ENCODE measurements at regions of chr15 and their contacts with region 1.

Region 1: DNA sequence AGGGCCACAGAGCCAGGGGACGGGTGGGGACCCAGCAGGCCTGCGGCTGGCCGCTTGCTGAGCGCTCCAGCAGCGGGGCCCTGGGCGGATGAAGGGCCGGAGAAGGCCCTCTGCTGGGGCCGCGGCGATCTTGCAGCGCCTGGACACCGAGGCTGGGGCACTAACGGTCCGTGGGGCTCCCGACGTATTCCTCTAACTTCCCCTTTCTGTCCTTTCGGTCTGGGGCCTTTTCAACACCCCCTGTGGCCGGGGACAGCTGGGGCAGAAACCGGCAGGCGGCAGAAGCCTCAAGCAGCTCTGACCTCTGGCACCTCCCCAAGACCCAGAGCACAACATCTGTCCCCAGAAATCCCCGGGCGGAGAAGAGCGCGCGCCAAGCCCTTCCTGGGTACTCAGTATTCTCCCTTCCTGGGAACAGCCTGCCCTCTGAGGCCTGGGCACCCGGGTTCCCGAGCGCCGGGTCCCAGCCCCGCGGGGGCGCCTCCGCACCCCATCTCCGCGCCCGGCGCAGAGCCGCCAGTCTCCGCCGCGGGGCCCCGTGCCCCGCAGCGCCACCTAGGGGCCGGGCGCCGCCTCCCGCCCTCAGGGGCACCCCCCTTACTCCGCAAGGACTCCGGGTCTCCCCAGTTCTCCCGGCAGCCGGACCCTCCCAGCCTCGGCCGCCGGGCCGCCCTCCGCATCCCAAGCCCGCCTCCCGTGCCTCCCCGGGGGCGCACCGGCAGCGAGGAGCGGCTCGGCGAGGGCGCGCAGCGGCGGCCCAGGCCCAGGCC is 582 bp upstream of the SLCO3A1 start:
- DNase-seq: peak; percentile 83
- ATAC-seq: peak; percentile 80 to 91 (median 86)
- H3K4me3 ChIP-seq: peak overlapping the region; percentile 69 to 89 (median 82)
- H3K27ac ChIP-seq: peak overlapping the region; percentile 93 to 99 (median 97)
- H3K4me1 ChIP-seq: peaks cover 3 to 64% (median 53%) of the 10 kb centered on the region in 9 donors
- H3K27me3 ChIP-seq: no peaks in the 10 kb centered on the region
- CTCF ChIP-seq: peak; percentile 53 to 91 (median 71)

Region 2: DNA sequence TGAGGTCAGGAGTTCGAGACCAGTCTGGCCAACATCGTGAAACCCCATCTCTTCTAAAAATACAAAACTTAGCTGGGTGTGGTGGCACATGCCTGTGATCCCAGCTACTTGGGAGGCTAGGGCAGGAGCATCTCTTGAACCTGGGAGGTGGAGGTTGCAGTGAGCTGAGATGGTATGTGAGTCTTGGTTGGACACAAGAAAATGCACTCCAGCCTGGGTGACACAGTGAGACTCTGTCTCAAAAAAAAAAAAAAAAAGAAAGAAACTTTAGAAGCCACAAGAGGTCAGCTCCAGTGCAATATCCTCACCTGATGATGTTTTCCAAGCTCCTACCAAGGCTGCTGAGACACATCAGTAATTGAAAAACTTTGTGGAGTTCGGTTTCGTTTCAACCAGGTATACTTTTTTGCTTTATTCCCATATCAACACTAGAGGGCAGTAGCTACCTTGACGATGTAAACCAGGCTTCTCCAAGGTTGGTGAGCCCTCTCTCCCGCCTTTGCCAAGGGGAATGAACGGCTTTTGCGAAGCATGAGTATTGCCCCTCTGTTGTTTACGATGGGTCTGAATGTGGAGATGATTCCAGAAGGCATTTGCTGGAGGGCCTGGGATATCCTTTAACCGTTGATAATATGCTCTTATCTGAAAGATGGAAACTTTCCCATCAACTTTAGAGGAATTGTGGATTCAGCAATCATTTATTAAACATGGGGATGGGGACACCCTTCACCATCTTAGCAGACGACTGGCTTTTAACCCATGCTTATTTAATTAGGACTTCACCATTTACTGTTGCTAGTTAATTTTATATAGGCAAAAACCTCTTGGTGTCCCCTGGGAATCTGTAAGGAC is 550.1 kb before region 1 on chr15:
- intact Hi-C with region 1: loop called (anchors 2 to 10 kb)
- DNase-seq: peak in 1 of 2 donors; percentile 48
- ATAC-seq: peak; percentile 76 to 91 (median 80)
- H3K4me3 ChIP-seq: no peak overlapping the region
- H3K27ac ChIP-seq: no peak overlapping the region
- H3K4me1 ChIP-seq: peaks cover 0 to 24% (median 9%) of the 10 kb centered on the region in 9 donors
- H3K27me3 ChIP-seq: peaks cover 0 to 18% (median 7%) of the 10 kb centered on the region in 7 donors
- CTCF ChIP-seq: peak; percentile 44 to 83 (median 74)

Region 3: GRCh38 chr15:91522663-91523332 is 330.1 kb before region 1 on chr15:
- intact Hi-C with region 1: loop called in 1 of 10 experiments (anchors 10 kb)
- DNase-seq: peak in 1 of 2 donors; percentile 14
- ATAC-seq: peak in 5 of 8 donors; percentile 42 to 75 (median 71)
- H3K4me3 ChIP-seq: no peak overlapping the region
- H3K27ac ChIP-seq: no peak overlapping the region
- H3K4me1 ChIP-seq: peaks cover 0 to 14% (median 0%) of the 10 kb centered on the region in 9 donors
- H3K27me3 ChIP-seq: no peaks in the 10 kb centered on the region
- CTCF ChIP-seq: peak in 8 of 9 donors; percentile 12 to 66 (median 54)

Region 4: DNA sequence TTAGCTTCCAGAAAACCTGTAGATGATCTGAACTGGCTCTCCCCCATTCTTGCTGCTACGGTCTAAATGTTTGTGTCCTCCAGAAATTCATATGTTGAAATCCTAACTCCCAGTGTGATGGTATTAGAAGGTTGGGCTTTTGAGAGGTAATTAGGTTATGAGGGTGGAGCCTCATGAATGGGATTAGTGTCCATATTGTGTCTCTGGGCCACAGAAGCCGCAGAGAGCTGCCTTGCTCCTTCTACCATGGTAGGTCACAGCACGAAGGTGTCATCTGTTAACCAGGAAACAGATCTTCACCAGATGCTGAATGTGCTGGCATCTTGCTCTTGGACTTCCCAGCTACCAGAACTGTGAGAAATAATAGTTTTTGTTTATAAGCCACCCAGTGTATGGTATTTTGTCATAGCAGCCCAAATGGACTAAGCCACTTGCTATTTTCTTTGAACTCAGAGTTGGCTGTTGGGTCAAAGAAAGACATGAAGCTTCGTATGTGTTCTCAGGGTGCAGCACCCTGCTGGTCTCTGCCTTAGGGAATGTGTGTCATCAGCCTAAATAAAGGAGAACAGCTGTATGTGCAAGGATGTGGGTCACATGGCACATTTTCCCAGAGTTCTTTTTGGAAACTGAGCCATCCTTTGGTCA is 316.9 kb before region 1 on chr15:
- intact Hi-C with region 1: no loop called
- DNase-seq: no peak
- ATAC-seq: peak in 3 of 8 donors; percentile 31 to 50 (median 40)
- H3K4me3 ChIP-seq: no peak overlapping the region
- H3K27ac ChIP-seq: peak overlapping the region in 7 of 10 donors; percentile 1 to 75 (median 30)
- H3K4me1 ChIP-seq: peaks cover 0 to 28% (median 17%) of the 10 kb centered on the region in 9 donors
- H3K27me3 ChIP-seq: no peaks in the 10 kb centered on the region
- CTCF ChIP-seq: no peak

Region 5: DNA sequence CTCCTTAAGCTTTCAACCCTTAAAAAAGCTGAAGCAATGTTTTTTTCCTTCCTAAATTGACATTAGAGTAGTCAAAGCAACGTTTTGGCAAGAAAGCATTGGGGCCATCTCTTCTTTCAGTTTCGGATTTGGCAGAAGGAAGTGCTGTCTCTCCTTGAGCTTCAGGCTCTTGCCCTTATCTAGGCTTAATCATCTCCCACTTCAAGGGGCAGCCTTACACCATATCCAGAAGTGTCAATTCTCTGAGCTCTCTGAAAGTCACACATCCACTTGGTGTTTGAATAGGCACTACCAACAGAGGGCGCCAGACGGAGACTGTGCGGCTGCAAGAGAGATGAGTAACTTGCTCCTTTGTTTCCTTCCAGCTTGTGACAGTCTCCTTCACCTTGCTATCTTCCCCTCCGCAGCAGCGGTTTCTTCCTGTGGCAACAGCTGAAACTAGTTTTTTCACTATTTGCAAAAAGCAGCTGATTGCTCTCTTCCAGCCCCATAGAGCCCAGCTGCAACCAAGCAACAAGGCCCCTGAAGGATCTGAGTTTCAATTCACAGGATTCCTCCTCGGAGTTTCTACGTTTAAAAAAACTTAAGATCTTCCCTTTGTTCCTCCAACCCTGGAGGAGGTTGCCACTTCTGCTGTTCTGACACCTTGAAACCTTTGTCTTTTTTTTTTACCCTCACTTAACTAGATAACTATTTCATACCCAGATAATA is 146.4 kb before region 1 on chr15:
- intact Hi-C with region 1: loop called (anchors 2 to 10 kb)
- DNase-seq: peak; percentile 62 to 82
- ATAC-seq: peak; percentile 78 to 90 (median 84)
- H3K4me3 ChIP-seq: peak overlapping the region in 1 of 10 donors; percentile 3
- H3K27ac ChIP-seq: peak overlapping the region in 5 of 10 donors; percentile 8 to 79 (median 32)
- H3K4me1 ChIP-seq: peaks cover 0 to 23% (median 6%) of the 10 kb centered on the region in 9 donors
- H3K27me3 ChIP-seq: no peaks in the 10 kb centered on the region
- CTCF ChIP-seq: peak; percentile 77 to 95 (median 93)

Region 6: GRCh38 chr15:91936182-91936775 is 83.4 kb after region 1 on chr15:
- intact Hi-C with region 1: loop called in 7 of 10 experiments (anchors 5 to 10 kb)
- DNase-seq: no peak
- ATAC-seq: peak in 1 of 8 donors; percentile 28
- H3K4me3 ChIP-seq: no peak overlapping the region
- H3K27ac ChIP-seq: peak overlapping the region in 5 of 10 donors; percentile 13 to 58 (median 36)
- H3K4me1 ChIP-seq: peaks cover 13 to 67% (median 54%) of the 10 kb centered on the region in 9 donors
- H3K27me3 ChIP-seq: no peaks in the 10 kb centered on the region
- CTCF ChIP-seq: no peak

Region 7: GRCh38 chr15:91965501-91966184 is 112.7 kb after region 1 on chr15:
- intact Hi-C with region 1: loop called in 6 of 10 experiments (anchors 5 to 10 kb)
- DNase-seq: no peak
- ATAC-seq: peak in 6 of 8 donors; percentile 17 to 41 (median 28)
- H3K4me3 ChIP-seq: no peak overlapping the region
- H3K27ac ChIP-seq: peak overlapping the region in 9 of 10 donors; percentile 7 to 57 (median 48)
- H3K4me1 ChIP-seq: peaks cover 25 to 93% (median 68%) of the 10 kb centered on the region in 9 donors
- H3K27me3 ChIP-seq: no peaks in the 10 kb centered on the region
- CTCF ChIP-seq: no peak

Region 8: DNA sequence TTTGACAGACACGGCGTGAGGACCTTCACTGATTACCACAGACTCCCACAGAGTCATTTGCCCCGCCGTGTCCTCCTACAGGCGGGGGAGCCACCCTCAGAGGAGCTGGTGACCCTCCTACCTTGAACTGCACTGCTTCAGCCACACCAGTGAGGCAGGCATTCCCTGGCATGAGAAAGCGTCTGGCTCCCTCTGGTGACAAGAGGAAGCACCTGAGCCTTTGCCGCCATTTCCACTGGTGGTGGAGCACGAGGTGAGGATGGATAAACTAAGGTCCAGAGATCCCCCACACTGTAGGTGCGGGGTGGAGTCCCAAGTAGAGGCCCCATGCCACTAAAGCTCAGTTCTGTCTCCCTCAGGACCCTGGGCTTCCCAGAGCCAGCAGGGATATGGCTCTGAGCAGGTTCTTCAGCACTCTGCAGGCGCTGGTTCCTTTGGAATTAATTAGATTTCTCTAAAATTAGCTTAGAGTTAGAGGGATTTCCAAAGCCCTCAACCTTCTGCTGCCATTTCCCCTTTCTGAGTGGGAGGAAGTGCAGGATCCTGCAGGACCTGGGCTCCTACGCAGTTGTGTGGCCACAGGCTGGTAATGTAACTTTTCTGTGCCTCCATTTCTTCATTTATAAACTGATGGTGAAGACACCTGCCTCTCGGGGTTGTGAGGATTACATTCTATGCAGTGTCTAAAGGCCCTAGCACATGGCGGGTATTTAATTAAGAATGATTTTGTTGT is 224.6 kb after region 1 on chr15:
- intact Hi-C with region 1: loop called in 8 of 10 experiments (anchors 1 to 5 kb)
- DNase-seq: peak; percentile 67 to 83
- ATAC-seq: peak; percentile 71 to 84 (median 76)
- H3K4me3 ChIP-seq: no peak overlapping the region
- H3K27ac ChIP-seq: no peak overlapping the region
- H3K4me1 ChIP-seq: peaks cover 9 to 70% (median 61%) of the 10 kb centered on the region in 9 donors
- H3K27me3 ChIP-seq: no peaks in the 10 kb centered on the region
- CTCF ChIP-seq: peak; percentile 59 to 91 (median 78)

Measured in heart right ventricle (tissue), 16 donors.